CD4-positive, alpha-beta T cell (primary cell): ENCODE measurements at regions of chr2 and their contacts with region 1.

Region 1: DNA sequence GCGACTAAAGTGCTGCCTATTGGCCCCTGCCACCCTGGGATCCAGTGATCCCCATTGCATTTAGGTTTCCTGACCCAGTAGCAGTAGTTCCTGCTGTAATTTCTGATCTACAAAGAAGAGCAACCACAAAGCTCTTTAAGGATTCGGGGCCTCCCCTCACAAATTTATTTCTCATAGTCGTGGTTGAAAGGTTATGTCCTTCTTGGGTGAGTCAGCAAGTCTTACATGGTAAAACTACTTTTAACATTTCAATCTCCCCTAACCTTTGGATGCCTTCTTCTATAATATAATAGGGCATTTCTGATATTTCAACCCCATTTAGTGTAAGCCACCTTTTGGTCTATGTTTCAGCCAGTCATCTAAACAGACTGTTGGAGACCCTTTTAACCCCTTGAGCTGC is 14.9 kb downstream of the PIKFYVE start:
- DNase-seq: no peak
- ATAC-seq: no peak
- H3K4me3 ChIP-seq: no peak overlapping the region
- H3K4me3 Mint-ChIP-seq: no peak overlapping the region
- H3K27ac ChIP-seq: no peak overlapping the region
- H3K27ac Mint-ChIP-seq: peak overlapping the region; percentile 44
- H3K4me1 ChIP-seq: no peaks in the 10 kb centered on the region
- H3K4me1 Mint-ChIP-seq: peaks cover 42% of the 10 kb centered on the region
- H3K27me3 ChIP-seq: no peaks in the 10 kb centered on the region
- H3K27me3 Mint-ChIP-seq: no peaks in the 10 kb centered on the region
- CTCF ChIP-seq: no peak

Region 2: DNA sequence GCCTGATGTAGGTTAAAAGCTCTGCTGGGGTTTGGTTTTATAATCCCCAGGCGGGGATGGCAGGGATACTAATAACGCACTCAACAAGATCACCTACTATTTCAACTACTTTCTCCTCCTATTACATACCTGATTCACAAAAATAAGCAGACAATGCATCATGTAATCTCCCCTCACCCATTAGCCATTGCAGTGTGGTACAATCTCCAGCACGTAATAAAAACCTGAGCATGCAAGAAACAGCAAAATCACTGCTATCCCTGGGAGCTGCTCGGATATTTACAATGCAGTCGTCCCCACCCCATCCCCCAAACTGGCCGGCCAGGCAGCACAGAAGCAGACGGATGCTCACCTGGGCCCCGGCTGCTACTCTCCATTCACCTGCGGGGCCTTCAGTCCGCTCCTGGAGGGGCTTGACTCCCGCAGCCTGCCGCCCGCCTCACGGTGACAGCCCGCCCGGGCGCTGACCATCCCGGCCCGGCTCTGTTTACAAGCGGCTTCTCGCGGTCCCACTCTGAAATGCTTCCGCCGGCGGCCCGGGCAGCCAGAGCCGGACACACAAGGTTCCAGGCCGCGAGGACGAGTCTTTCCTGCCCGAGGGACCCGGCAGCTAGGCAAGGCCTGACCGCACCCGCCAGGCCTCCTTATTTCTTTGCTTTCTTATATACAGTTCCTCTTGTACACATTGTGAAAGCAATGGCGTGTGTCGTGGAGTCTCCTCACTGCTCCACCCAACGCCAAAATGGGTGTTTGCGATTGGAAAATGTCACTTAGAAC is 255.7 kb before region 1 on chr2 and contains the start of gene PLEKHM3:
- CTCF ChIA-PET with region 1: no interaction called
- POLR2A ChIA-PET with region 1: no interaction called
- intact Hi-C with region 1: no loop called
- DNase-seq: peak; percentile 39 to 83 (median 67)
- ATAC-seq: peak; percentile 74
- H3K4me3 ChIP-seq: peak within 1 kb of the TSS; percentile 82
- H3K4me3 Mint-ChIP-seq: peak within 1 kb of the TSS; percentile 89
- H3K27ac ChIP-seq: peak within 1 kb of the TSS; percentile 58 to 63
- H3K27ac Mint-ChIP-seq: peak within 1 kb of the TSS; percentile 92
- H3K4me1 ChIP-seq: peaks cover 10% of the 10 kb centered on the region
- H3K4me1 Mint-ChIP-seq: peaks cover 21% of the 10 kb centered on the region
- H3K27me3 ChIP-seq: no peaks in the 10 kb centered on the region
- H3K27me3 Mint-ChIP-seq: no peaks in the 10 kb centered on the region
- CTCF ChIP-seq: no peak
- total RNA-seq, gene PLEKHM3: 11.3 to 11.6 TPM

Region 3: DNA sequence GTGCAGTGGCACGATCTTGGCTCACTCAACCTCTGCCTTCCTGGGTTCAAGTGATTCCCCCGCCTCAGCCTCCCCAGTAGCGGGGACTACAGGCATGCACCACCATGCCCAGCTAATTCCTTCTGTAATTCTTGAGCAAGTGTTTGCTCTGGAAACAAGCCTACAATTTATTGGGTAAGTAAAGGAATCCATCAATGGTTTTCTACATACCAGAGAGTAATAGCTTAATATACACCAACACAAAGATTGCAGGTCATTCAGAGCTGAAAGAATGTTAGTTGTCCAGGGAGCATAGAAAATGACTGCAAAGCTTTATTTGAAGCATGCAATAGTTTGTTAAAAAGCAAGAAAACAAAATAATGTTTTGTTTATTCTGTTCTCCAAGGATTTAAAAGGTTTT is 31.7 kb before region 1 on chr2:
- CTCF ChIA-PET with region 1: no interaction called
- POLR2A ChIA-PET with region 1: no interaction called
- intact Hi-C with region 1: loop called in 1 of 2 experiments (anchors 5 kb)
- DNase-seq: no peak
- ATAC-seq: no peak
- H3K4me3 ChIP-seq: no peak overlapping the region
- H3K4me3 Mint-ChIP-seq: no peak overlapping the region
- H3K27ac ChIP-seq: no peak overlapping the region
- H3K27ac Mint-ChIP-seq: no peak overlapping the region
- H3K4me1 ChIP-seq: peaks cover 7% of the 10 kb centered on the region
- H3K4me1 Mint-ChIP-seq: peaks cover 13% of the 10 kb centered on the region
- H3K27me3 ChIP-seq: no peaks in the 10 kb centered on the region
- H3K27me3 Mint-ChIP-seq: no peaks in the 10 kb centered on the region
- CTCF ChIP-seq: no peak